ENCODE measurements at regions of chr16 and their contacts with region 1.

Region 1: DNA sequence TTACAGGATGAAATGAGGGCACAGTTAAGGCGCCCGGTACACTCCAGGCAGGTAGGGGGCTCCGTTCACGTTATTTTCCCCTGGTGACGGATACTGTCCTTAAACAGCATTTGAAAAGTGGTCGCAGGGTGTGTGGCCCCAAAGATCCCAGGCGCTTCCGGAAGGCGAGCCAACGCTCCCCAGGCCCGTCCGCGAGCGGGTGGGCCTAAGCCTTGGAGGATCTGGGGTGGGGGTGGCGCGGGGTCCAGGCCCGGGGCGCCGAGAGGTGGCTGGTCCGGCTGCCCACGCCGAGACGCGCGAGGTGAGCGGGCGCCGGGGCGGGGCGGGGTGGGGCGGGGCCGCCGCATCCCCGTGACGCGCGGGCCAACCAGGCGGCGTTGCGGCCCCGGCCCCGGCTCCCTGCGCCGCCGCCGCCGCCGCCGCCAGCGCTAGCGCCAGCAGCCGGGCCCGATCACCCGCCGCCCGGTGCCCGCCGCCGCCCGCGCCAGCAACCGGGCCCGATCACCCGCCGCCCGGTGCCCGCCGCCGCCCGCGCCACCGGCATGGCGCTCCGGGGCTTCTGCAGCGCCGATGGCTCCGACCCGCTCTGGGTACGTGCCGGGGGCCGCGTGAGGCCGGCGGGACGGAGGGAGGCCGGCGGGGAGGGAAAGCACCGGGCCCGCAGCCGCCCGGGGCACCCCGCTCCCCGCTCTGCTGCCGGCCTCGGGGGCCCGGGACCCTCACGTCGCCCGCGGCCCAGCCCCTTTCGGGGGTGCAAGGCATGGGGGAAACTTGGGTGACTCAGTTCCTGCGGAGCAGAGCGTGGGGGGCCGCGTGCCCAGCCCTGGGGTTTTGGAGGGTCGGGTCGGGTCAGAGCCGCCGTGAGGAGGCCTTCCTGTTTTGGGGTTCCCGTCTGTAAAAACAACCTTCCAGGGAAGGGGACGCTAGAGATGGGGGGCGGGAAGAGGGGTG is at the start of gene ABCC1:
- DNase-seq: peak; percentile 74
- H3K4me3 ChIP-seq: peak within 1 kb of the TSS; percentile 81
- H3K27ac ChIP-seq: peak within 1 kb of the TSS; percentile 78
- H3K4me1 ChIP-seq: peaks cover 40% of the 10 kb centered on the region
- CTCF ChIP-seq: peak; percentile 62
- total RNA-seq, gene ABCC1: 39.9 and 43.3 TPM in 2 replicates

Region 2: GRCh38 chr16:15888072-15888976 is 61.2 kb before region 1 on chr16 and contains the start of gene CEP20:
- CTCF ChIA-PET with region 1: no interaction called
- POLR2A ChIA-PET with region 1: interaction called, 5 read pairs
- intact Hi-C with region 1: loop called (anchors 1 kb)
- DNase-seq: peak; percentile 100
- H3K4me3 ChIP-seq: peak within 1 kb of the TSS; percentile 94
- H3K27ac ChIP-seq: peak within 1 kb of the TSS; percentile 68
- H3K4me1 ChIP-seq: peaks cover 29% of the 10 kb centered on the region
- CTCF ChIP-seq: no peak
- total RNA-seq, gene CEP20: 33.7 and 36.6 TPM in 2 replicates

Region 3: DNA sequence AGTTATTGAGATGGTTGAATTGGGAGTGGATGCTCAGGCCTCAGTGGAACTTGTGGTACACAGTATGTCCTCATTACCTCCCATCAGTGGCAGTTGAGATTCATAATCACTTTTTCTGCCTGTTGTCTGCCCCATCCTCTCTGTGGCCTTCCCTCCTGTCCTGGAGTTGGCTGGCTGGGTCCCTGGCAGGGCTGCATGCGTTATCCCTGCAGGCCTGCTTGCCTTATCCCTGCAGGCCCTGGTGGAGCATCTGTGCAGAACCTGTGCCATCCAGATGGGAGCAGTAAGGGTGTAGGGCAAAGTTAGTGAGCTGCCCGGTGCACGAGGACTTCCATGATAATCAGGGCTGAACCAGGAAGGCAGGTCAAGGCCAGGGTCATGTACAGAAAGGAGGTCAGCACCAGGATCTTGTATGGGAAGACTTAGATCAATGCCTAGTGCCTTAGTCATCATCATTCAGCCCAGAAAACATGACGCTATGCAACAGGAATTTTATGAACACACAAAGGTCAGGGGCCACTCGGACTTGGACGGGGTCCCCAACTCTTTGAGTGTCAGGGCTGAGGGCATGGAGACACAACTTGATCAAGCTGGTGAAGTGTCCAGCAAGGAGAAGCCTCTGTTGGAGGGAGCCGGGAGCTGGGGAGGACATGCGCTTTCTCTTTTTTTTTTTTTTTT is 47.1 kb after region 1 on chr16:
- CTCF ChIA-PET with region 1: no interaction called
- POLR2A ChIA-PET with region 1: interaction called, 3 read pairs
- intact Hi-C with region 1: loop called (anchors 5 kb)
- DNase-seq: no peak
- H3K4me3 ChIP-seq: no peak overlapping the region
- H3K27ac ChIP-seq: peak overlapping the region; percentile 47
- H3K4me1 ChIP-seq: peaks cover 71% of the 10 kb centered on the region
- CTCF ChIP-seq: no peak